Activated T-helper 1 cell treated with anti-CD3 and anti-CD28 coated beads, Interleukin-12 subunit alpha, Interleukin-12 subunit beta, Interleukin-2, Interleukin-4 antibody, amounts not matched to agents 30 ng/mL and 10 ng/mL and 1 ng/mL, durations not matched to agents 14 hours and 24 hours and 36 hours (primary cell): ENCODE measurements at regions of chr7 and their contacts with region 1.

Region 1: GRCh38 chr7:12322284-12322902 is 81.3 kb downstream of the VWDE start:
- DNase-seq: no peak
- H3K4me3 Mint-ChIP-seq: no peak overlapping the region
- H3K27ac Mint-ChIP-seq: no peak overlapping the region
- H3K4me1 Mint-ChIP-seq: no peaks in the 10 kb centered on the region
- H3K27me3 Mint-ChIP-seq: peaks cover 2% of the 10 kb centered on the region

Region 2: GRCh38 chr7:11427686-11428273 is 894.6 kb before region 1 on chr7:
- intact Hi-C with region 1: loop called (anchors 5 kb)
- DNase-seq: no peak
- H3K4me3 Mint-ChIP-seq: no peak overlapping the region
- H3K27ac Mint-ChIP-seq: no peak overlapping the region
- H3K4me1 Mint-ChIP-seq: no peaks in the 10 kb centered on the region
- H3K27me3 Mint-ChIP-seq: no peaks in the 10 kb centered on the region

Region 3: GRCh38 chr7:11831736-11832495 is 490.5 kb before region 1 on chr7 and contains the start of gene THSD7A:
- intact Hi-C with region 1: loop called (anchors 10 kb)
- DNase-seq: no peak
- H3K4me3 Mint-ChIP-seq: no peak within 1 kb of the TSS
- H3K27ac Mint-ChIP-seq: no peak within 1 kb of the TSS
- H3K4me1 Mint-ChIP-seq: peaks cover 8% of the 10 kb centered on the region
- H3K27me3 Mint-ChIP-seq: peaks cover 27% of the 10 kb centered on the region
- total RNA-seq, gene THSD7A: not detected in 2 replicates

Region 4: DNA sequence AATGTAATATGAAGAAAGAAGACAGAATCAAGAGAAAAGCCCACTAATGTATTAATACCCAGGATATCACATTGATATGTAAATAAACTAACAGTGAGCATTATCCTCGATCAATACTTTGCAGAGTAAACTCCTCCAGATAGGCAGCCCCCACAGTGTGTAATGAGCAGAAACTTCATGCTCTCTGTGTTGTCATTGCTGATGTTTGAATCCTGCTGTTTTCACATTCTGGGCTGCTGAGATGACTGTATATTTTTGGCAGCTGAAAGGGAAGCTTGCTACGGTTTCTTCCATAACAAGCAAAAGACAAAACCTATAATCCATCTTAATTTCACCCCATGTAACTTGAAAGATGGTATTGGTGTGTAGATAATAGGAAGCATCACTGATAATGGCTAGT is 475.1 kb before region 1 on chr7:
- intact Hi-C with region 1: no loop called
- DNase-seq: no peak
- H3K4me3 Mint-ChIP-seq: no peak overlapping the region
- H3K27ac Mint-ChIP-seq: no peak overlapping the region
- H3K4me1 Mint-ChIP-seq: no peaks in the 10 kb centered on the region
- H3K27me3 Mint-ChIP-seq: no peaks in the 10 kb centered on the region

Region 5: DNA sequence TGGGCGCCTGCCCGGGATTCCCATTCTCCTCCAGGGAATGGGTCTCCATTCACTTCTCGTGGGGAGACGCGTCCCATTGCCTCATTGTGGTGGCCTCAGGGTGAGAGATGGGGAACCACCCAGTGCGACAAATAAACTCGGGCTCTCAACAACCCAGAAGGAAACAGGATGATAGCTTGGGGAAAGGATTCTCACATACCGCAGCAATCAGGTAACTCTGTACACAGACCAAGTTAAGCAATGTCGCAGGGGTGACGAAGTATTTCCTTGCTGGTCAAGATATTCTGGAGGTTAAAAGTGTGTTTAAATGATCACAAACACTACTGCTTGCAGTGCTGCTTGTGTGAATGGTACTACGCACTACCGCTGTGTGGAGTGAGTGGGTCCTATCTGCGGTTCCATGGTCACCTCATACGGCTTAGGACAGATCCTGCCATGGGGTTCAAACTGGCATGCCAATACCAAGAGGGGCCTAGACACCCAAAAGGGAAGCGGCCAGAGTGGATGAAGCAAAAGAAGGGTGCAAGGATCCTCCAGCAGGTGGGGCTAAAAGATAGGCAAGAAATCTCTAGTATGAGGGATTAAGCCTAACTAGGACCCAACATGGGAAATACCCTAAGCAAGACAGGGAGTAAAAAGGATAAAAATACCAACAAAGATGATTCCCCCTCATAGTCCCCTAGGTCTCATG is 255.1 kb before region 1 on chr7:
- intact Hi-C with region 1: loop called (anchors 1 kb)
- DNase-seq: peak; percentile 20
- H3K4me3 Mint-ChIP-seq: no peak overlapping the region
- H3K27ac Mint-ChIP-seq: no peak overlapping the region
- H3K4me1 Mint-ChIP-seq: no peaks in the 10 kb centered on the region
- H3K27me3 Mint-ChIP-seq: peaks cover 12% of the 10 kb centered on the region

Region 6: DNA sequence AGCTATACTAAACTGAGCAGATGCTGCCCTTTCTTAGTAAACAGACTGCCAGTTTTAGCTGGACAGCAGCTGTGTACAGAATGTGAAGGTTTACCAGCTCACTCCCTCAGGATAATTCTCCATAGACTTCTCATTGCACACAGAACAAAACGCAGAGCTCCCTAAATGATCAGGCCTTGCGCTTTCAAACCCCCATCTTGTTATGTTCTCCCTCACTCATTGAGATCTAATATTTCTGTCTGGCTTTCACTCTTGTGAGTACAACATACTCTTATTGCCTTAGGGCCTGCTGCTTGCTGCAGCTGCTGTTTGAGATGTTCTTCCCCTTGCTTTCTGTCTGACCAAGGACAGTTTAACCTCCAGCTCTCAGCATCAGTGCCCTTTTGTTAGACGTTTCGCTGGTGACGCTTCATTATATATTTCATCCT is 63.9 kb after region 1 on chr7:
- intact Hi-C with region 1: no loop called
- DNase-seq: no peak
- H3K4me3 Mint-ChIP-seq: no peak overlapping the region
- H3K27ac Mint-ChIP-seq: no peak overlapping the region
- H3K4me1 Mint-ChIP-seq: no peaks in the 10 kb centered on the region
- H3K27me3 Mint-ChIP-seq: no peaks in the 10 kb centered on the region